Activated CD4-positive, alpha-beta memory T cell treated with anti-CD3 and anti-CD28 coated beads, Interleukin-2, amount 10 ng/mL, durations not matched to agents 7 days and 5 days (primary cell): ENCODE measurements at regions of chr3 and their contacts with region 1.

Region 1: DNA sequence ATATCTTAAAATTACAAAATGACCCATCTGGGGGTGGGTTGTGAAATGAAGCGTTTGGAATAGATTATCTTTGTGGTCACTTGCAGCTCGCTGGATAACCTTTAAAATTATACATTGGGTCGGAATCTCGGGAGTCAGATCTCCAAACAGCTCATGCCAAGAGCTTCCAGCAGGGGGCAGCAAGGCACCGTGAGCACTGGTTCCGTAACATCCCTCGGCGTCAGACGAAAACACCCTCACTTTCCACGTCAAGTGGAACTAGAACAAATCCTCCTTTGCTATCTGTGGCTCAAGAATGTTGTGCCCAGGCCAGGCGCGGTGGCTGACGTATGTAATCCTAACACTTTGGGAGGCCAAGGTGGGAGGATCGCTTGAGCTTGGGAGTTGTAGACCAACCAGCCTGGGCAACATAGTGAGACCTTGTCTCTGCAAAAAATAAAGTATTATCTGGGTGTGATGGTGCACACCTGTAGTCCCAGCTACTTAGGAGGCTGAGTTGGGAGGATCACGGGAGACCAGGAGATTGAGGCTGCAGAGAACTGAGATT is 31.1 kb downstream of the UMPS start:
- DNase-seq: peak; percentile 80
- H3K4me3 Mint-ChIP-seq: no peak overlapping the region
- H3K27ac Mint-ChIP-seq: no peak overlapping the region
- H3K4me1 Mint-ChIP-seq: peaks cover 6% of the 10 kb centered on the region
- H3K27me3 Mint-ChIP-seq: peaks cover 5% of the 10 kb centered on the region

Region 2: DNA sequence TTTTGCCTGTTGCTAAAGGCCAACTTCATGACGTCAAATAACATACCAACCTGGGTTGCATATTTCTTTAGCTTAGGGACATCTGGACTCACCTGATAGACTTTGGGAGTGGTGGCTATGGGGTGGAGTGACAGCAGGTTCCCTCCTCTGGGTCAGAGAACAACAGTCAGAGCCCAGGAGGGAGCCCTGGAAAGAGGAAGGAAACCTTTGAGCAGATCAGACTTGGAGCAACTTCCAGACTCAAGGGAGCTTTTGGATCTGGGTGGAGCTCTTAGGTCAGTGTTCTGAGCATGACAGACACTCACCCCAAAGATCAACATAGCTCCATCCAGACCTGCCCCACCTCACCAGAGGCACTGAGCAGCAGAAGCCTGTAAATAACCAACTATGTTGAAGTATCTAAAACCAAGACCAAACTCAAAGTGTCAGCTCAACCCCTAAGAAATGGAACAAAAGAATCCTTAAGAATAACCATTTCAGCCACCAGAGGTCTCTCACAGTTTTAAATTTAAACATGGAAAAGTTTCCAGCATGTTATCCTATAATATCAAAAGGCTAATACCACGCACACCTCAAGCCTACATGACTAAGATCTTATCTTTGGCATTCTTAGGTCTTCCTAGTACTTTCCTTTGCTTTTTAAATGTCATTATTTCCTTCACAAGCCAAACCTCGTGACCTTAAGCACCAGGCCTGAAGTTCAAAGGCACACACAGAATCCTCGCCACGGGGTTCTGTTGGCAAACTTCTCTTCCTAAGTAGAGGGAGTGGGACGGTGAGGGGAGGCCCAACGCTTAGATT is 25.3 kb after region 1 on chr3:
- CTCF ChIA-PET with region 1: interaction called, 21 read pairs
- POLR2A ChIA-PET with region 1: interaction called, 3 read pairs
- DNase-seq: no peak
- H3K4me3 Mint-ChIP-seq: no peak overlapping the region
- H3K27ac Mint-ChIP-seq: no peak overlapping the region
- H3K4me1 Mint-ChIP-seq: peaks cover 14% of the 10 kb centered on the region
- H3K27me3 Mint-ChIP-seq: no peaks in the 10 kb centered on the region

Region 3: GRCh38 chr3:124867511-124867910 is 106.2 kb after region 1 on chr3:
- CTCF ChIA-PET with region 1: no interaction called
- POLR2A ChIA-PET with region 1: no interaction called
- DNase-seq: no peak
- H3K4me3 Mint-ChIP-seq: no peak overlapping the region
- H3K27ac Mint-ChIP-seq: no peak overlapping the region
- H3K4me1 Mint-ChIP-seq: no peaks in the 10 kb centered on the region
- H3K27me3 Mint-ChIP-seq: peaks cover 23% of the 10 kb centered on the region

Region 4: DNA sequence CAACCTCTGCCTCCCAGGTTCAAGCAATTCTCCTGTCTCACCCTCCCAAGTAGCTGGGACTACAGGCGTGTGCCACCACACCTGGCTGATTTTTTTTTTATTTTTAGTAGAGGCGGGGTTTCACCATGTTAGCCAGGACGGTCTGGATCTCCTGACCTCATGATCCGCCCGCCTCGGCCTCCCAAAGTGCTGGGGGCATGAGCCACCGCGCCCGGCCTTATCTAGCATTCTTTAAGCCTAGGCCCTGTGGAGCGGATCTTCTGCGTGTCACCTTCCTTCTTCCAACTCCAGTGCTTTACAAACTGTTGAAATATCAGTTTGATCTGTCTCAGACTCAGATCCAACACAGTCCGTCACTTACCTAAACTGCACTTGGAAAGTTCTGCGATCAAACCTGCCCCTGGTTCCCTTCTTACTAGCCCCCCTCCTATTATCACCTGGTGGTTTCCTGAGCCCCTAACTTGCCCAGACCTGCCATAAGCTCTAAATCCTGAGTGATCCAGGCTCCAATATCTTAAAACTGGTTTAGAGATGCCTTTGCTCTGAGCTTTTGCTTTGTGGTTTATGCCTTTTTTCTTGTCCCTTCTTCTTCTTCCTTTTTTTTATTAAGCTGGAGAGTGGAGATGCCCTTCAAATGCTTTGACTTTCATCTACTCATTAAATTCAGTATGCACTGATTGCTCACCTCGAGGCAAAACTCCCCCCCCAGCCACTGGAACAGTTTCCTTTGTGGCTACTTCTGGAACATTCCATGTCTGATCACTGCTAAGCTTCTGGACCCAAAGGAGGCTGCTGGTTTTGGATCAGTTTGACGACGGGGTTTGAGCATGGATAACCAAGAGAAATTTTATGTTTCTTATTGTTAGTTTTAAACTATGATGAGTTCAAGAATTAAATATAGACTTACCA is 129.2 kb after region 1 on chr3:
- CTCF ChIA-PET with region 1: interaction called, 18 read pairs
- POLR2A ChIA-PET with region 1: no interaction called
- DNase-seq: no peak
- H3K4me3 Mint-ChIP-seq: no peak overlapping the region
- H3K27ac Mint-ChIP-seq: no peak overlapping the region
- H3K4me1 Mint-ChIP-seq: peaks cover 8% of the 10 kb centered on the region
- H3K27me3 Mint-ChIP-seq: peaks cover 29% of the 10 kb centered on the region

Region 5: GRCh38 chr3:124895756-124896155 is 134.4 kb after region 1 on chr3:
- CTCF ChIA-PET with region 1: interaction called, 168 read pairs
- POLR2A ChIA-PET with region 1: interaction called, 6 read pairs
- DNase-seq: no peak
- H3K4me3 Mint-ChIP-seq: no peak overlapping the region
- H3K27ac Mint-ChIP-seq: no peak overlapping the region
- H3K4me1 Mint-ChIP-seq: peaks cover under 1% of the 10 kb centered on the region
- H3K27me3 Mint-ChIP-seq: no peaks in the 10 kb centered on the region

Region 6: GRCh38 chr3:124905849-124906248 is 144.5 kb after region 1 on chr3:
- CTCF ChIA-PET with region 1: interaction called, 168 read pairs
- POLR2A ChIA-PET with region 1: interaction called, 6 read pairs
- DNase-seq: no peak
- H3K4me3 Mint-ChIP-seq: no peak overlapping the region
- H3K27ac Mint-ChIP-seq: no peak overlapping the region
- H3K4me1 Mint-ChIP-seq: peaks cover 5% of the 10 kb centered on the region
- H3K27me3 Mint-ChIP-seq: peaks cover 27% of the 10 kb centered on the region

Region 7: GRCh38 chr3:125585595-125586223 is 824.4 kb after region 1 on chr3:
- CTCF ChIA-PET with region 1: interaction called, 14 read pairs
- POLR2A ChIA-PET with region 1: no interaction called
- DNase-seq: peak; percentile 48
- H3K4me3 Mint-ChIP-seq: no peak overlapping the region
- H3K27ac Mint-ChIP-seq: no peak overlapping the region
- H3K4me1 Mint-ChIP-seq: peaks cover 18% of the 10 kb centered on the region
- H3K27me3 Mint-ChIP-seq: no peaks in the 10 kb centered on the region

Region 8: GRCh38 chr3:125644036-125645010 is 883.0 kb after region 1 on chr3:
- CTCF ChIA-PET with region 1: no interaction called
- POLR2A ChIA-PET with region 1: no interaction called
- DNase-seq: no peak
- H3K4me3 Mint-ChIP-seq: no peak overlapping the region
- H3K27ac Mint-ChIP-seq: no peak overlapping the region
- H3K4me1 Mint-ChIP-seq: no peaks in the 10 kb centered on the region
- H3K27me3 Mint-ChIP-seq: no peaks in the 10 kb centered on the region